ENCODE measurements at regions of chr5 and their contacts with region 1.

Region 1: GRCh38 chr5:146221234-146221633 is 17.8 kb downstream of the RBM27 start:
- DNase-seq: no peak
- H3K4me3 Mint-ChIP-seq: no peak overlapping the region
- H3K27ac Mint-ChIP-seq: no peak overlapping the region
- H3K4me1 Mint-ChIP-seq: peaks cover 15% of the 10 kb centered on the region
- H3K27me3 Mint-ChIP-seq: no peaks in the 10 kb centered on the region

Region 2: DNA sequence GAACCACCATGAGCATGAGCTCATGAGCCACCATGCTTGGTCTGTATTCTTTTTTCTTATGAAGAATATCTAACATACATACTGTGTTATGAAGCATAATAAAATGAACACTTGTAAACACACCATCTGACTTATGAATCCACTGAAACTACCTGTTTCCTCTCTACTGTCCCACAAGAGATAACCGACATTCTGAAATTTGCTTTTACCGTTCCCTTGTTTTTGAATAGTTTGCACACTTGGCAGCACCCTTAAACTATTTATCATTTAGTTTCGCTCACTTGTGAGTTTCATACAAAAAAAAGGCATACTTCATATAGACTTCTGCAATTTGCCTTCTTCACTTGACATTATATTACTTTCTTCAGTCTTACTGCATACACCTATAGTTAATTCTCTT is 47.6 kb before region 1 on chr5:
- CTCF ChIA-PET with region 1: no interaction called
- intact Hi-C with region 1: loop called (anchors 5 kb)
- DNase-seq: no peak
- H3K4me3 Mint-ChIP-seq: no peak overlapping the region
- H3K27ac Mint-ChIP-seq: no peak overlapping the region
- H3K4me1 Mint-ChIP-seq: peaks cover 15% of the 10 kb centered on the region
- H3K27me3 Mint-ChIP-seq: no peaks in the 10 kb centered on the region

Region 3: DNA sequence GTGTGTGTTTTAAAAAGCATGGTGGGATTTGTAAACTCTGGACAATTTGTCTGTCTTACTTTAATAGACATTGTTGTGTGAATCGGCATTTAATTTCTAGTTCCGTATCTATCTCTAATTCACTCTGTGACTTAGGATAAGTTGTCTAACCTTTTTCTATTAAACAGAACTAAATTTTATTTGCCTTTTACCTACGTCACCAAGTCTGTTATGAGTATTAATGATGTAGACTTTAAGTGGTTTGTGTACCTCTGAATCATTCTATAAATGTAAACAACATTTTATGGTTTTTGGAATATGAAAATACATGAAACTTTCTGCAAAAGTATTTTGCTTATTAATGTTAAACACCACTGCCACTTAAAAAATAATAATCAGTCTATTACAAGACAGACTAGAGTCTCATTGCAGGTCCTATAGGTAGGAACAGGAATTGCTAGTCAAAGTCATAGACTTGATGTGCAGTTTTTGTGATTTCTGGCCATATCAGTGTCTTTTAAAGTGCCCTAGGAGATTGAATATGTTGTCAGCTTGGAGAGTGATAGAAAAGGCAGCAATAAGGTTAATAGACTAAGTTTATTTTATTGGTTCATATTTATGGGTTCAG is 12.2 kb before region 1 on chr5:
- CTCF ChIA-PET with region 1: no interaction called
- intact Hi-C with region 1: loop called (anchors 2 kb)
- DNase-seq: no peak
- H3K4me3 Mint-ChIP-seq: no peak overlapping the region
- H3K27ac Mint-ChIP-seq: no peak overlapping the region
- H3K4me1 Mint-ChIP-seq: peaks cover 36% of the 10 kb centered on the region
- H3K27me3 Mint-ChIP-seq: no peaks in the 10 kb centered on the region

Region 4: DNA sequence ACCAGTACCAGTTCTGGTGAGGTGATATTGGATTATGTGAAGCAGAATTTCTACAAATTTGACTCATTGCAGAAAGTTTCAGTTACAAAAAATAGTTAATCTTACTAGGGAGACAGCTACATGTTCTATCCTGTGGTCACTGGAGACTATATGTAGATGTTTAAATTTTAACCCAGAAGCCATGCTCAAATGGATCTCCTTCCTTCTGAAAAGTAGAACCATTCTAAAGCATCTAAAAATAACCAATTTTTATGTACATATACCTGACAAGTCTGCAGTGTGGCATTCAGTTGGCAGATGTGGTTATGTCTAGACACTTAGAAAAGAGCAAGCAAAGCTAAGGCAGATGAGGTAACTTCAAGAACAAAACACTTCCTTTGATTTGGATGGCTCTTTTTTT is 51.9 kb after region 1 on chr5:
- CTCF ChIA-PET with region 1: no interaction called
- intact Hi-C with region 1: no loop called
- DNase-seq: no peak
- H3K4me3 Mint-ChIP-seq: no peak overlapping the region
- H3K27ac Mint-ChIP-seq: no peak overlapping the region
- H3K4me1 Mint-ChIP-seq: no peaks in the 10 kb centered on the region
- H3K27me3 Mint-ChIP-seq: no peaks in the 10 kb centered on the region

Measured in activated naive CD4-positive, alpha-beta T cell treated with anti-CD3 and anti-CD28 coated beads for 36 hours (primary cell).